ENCODE measurements at regions of chr18 and their contacts with region 1.

Region 1: DNA sequence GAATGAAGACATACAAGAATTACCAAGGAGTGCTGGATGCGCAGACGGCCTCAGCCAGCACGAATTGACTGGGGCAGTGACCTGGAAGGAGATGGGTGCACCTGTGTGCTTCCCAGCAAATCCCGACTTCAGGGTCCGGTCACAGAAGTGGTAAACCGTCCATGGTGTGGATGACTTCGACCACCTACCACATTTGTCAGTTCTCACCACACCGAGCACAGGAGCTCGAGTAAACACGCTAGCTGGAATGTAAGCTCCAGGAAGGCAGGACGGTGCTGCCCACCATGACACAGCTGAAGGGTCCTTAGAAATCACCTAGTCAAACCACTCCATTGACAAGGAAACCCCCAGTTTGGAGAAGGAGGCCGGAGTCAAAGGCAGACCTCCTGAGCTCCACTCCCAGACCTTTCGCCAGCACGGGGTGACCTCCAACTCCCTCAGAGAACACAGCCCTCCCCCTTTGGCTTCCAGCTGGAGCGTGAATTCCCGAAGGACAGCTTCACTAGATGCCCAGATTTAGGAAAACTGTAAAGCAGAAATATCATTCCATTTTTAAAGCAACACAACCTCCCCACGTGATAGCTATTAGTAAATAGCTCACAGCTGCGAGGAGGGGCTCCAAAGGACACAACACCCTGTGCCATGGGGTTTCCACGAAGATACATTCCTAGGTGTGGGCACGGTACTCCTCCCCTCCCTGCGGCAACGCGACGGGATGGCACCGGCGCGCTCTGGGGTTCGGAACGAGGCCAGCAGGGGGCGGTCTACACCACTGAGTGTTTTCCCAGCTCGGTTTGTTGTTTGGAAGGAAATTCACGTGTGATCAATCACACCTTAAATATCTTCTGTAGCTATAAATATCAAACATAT is 34.1 kb upstream of the GNAL start:
- DNase-seq: peak; percentile 56
- H3K4me3 ChIP-seq: no peak overlapping the region
- H3K27ac ChIP-seq: no peak overlapping the region
- H3K4me1 ChIP-seq: no peaks in the 10 kb centered on the region
- H3K27me3 ChIP-seq: peaks cover 58% of the 10 kb centered on the region
- CTCF ChIP-seq: peak; percentile 87

Region 2: GRCh38 chr18:11387880-11388279 is 267.1 kb before region 1 on chr18:
- CTCF ChIA-PET with region 1: no interaction called
- POLR2A ChIA-PET with region 1: no interaction called
- intact Hi-C with region 1: no loop called
- DNase-seq: peak; percentile 81
- H3K4me3 ChIP-seq: no peak overlapping the region
- H3K27ac ChIP-seq: no peak overlapping the region
- H3K4me1 ChIP-seq: peaks cover 10% of the 10 kb centered on the region
- H3K27me3 ChIP-seq: peaks cover 10% of the 10 kb centered on the region
- CTCF ChIP-seq: peak; percentile 49

Region 3: DNA sequence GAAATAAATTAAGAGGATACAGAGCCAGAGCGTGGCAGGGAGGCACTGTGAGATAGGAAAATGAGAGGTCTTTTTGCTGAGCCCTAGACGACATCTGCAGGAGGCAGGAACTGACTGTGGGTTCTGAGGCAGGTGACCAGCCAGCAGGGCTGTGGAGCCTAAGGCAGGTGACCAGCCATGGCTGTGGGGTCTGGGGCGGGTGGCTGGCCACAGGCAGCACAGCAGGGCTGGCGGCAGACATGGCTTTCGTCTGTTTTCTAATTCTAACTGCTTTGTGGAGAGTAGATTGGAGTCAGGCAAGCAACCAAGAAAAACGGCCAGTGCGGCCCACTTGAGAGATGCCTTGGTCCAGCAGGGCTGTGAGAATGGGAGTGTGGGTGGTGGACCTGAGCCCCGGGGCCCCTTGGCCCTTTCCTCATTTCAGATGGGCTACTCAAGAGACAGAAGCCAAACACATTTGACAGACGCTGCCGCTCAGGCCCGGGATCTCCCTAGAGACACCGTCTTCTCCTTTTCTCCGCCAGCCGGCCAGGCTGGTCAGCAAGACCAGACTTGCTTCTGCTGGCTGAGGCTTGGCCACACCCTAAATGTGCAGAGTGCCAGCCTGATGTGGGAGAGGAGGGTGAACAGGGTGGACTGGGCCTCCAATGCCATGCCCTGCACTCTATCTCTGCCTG is 14.4 kb after region 1 on chr18:
- CTCF ChIA-PET with region 1: no interaction called
- POLR2A ChIA-PET with region 1: no interaction called
- intact Hi-C with region 1: no loop called
- DNase-seq: no peak
- H3K4me3 ChIP-seq: no peak overlapping the region
- H3K27ac ChIP-seq: no peak overlapping the region
- H3K4me1 ChIP-seq: no peaks in the 10 kb centered on the region
- H3K27me3 ChIP-seq: peaks cover 87% of the 10 kb centered on the region
- CTCF ChIP-seq: no peak

Region 4: DNA sequence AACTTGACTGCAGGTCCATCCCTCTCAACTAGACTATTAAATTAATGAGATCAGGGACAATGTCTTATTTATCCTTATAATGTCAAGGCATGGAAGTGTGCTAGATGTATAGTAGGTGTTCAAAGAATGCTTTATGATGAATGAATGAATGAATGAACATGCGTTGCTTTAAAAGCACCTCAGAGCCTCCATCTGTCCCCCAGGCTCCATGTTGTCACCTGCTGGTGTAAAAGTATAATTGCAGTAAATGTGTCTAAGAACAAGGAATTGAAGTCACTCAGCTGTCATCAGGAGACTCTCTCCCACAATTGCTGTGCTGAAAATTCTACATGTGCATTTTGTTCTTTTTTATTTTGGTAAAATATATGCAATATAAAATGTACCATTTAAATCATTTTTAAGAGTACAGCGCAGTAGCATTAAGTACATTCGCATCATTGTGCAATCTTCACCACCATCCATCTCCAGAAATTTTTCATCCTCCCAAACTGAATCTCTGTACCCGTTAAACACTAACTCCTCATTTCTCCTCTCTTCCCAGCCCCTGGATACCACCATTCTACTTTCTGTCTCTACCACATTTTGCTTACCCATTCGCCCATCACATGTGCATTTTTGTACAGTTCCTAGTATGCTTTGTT is 86.7 kb after region 1 on chr18:
- CTCF ChIA-PET with region 1: interaction called, 4 read pairs
- POLR2A ChIA-PET with region 1: no interaction called
- intact Hi-C with region 1: loop called (anchors 5 kb)
- DNase-seq: peak; percentile 26
- H3K4me3 ChIP-seq: no peak overlapping the region
- H3K27ac ChIP-seq: no peak overlapping the region
- H3K4me1 ChIP-seq: no peaks in the 10 kb centered on the region
- H3K27me3 ChIP-seq: peaks cover 92% of the 10 kb centered on the region
- CTCF ChIP-seq: peak; percentile 63

Region 5: GRCh38 chr18:11872479-11873136 is 217.6 kb after region 1 on chr18:
- CTCF ChIA-PET with region 1: no interaction called
- POLR2A ChIA-PET with region 1: no interaction called
- intact Hi-C with region 1: loop called (anchors 10 kb)
- DNase-seq: peak; percentile 33
- H3K4me3 ChIP-seq: no peak overlapping the region
- H3K27ac ChIP-seq: no peak overlapping the region
- H3K4me1 ChIP-seq: no peaks in the 10 kb centered on the region
- H3K27me3 ChIP-seq: peaks cover 15% of the 10 kb centered on the region
- CTCF ChIP-seq: peak; percentile 57

Region 6: DNA sequence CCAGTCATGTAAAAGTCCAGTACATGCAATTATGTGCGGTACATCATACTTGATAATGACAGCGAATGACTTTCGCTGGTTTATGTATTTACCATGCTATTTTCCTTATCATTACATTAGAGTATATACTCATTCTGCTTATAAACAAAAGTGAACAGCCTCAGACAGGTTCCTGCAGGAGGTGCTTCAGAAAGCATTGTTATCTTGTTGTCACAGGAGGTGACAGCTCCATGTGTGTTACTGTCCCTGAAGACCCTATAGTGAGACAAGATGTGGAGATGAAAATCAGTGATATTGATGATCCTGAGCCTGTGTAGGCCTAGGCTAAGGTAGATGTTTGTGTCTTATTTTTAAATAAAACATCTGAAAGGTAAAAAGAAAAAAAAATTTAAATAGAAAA is 268.5 kb after region 1 on chr18:
- CTCF ChIA-PET with region 1: no interaction called
- POLR2A ChIA-PET with region 1: no interaction called
- intact Hi-C with region 1: no loop called
- DNase-seq: no peak
- H3K4me3 ChIP-seq: no peak overlapping the region
- H3K27ac ChIP-seq: no peak overlapping the region
- H3K4me1 ChIP-seq: no peaks in the 10 kb centered on the region
- H3K27me3 ChIP-seq: no peaks in the 10 kb centered on the region
- CTCF ChIP-seq: no peak

Region 7: GRCh38 chr18:12038639-12039417 is 383.9 kb after region 1 on chr18:
- CTCF ChIA-PET with region 1: no interaction called
- POLR2A ChIA-PET with region 1: no interaction called
- intact Hi-C with region 1: loop called (anchors 2 kb)
- DNase-seq: peak; percentile 67
- H3K4me3 ChIP-seq: peak overlapping the region; percentile 57
- H3K27ac ChIP-seq: no peak overlapping the region
- H3K4me1 ChIP-seq: no peaks in the 10 kb centered on the region
- H3K27me3 ChIP-seq: no peaks in the 10 kb centered on the region
- CTCF ChIP-seq: peak; percentile 96

Region 8: DNA sequence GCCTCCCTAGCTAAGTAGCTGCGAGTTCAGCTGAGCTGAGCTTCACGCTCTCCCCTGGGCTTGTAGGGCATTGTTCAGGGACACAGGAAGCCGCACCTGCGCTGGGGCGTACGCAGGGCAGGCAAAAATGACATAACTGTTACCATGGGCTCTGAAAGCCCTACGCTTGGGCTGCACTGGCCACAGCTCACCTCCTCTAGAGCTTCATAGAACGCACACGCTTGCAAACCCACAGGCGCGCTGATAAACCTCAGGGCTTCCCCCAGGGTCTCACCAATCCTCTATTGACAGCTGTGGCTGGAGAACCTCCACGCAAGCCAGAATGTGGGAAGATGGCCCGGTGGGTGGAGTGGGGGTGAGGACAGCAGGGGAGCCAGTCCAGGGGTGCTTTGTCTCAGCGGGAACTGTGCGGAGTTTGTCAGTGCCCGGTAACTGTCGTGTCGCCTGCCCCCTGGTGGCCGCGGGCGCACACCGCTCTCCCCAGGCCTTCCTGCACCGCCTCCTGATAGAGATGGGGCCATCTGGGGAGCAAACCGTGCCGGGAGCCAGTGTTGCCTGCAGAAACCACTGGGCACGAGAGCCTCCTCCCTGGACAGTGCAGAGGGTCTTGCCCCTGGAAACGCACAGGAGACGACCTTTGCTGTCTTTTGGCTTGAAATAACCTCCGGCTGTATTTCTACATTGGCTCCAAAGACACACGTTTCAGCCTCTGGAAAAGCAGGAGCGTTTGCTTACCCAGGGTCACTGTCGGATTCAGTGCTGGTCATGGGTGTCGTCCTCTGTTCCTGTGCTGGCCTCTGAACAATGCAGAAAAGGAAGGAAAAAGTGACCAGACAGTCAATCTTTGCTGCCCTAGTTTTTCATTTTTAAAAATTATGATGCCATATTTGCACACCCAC is 582.2 kb after region 1 on chr18:
- CTCF ChIA-PET with region 1: no interaction called
- POLR2A ChIA-PET with region 1: no interaction called
- intact Hi-C with region 1: loop called (anchors 5 kb)
- DNase-seq: peak; percentile 75
- H3K4me3 ChIP-seq: no peak overlapping the region
- H3K27ac ChIP-seq: no peak overlapping the region
- H3K4me1 ChIP-seq: no peaks in the 10 kb centered on the region
- H3K27me3 ChIP-seq: peaks cover 13% of the 10 kb centered on the region
- CTCF ChIP-seq: peak; percentile 97